ENCODE measurements at regions of chr1 and their contacts with region 1.

Region 1: DNA sequence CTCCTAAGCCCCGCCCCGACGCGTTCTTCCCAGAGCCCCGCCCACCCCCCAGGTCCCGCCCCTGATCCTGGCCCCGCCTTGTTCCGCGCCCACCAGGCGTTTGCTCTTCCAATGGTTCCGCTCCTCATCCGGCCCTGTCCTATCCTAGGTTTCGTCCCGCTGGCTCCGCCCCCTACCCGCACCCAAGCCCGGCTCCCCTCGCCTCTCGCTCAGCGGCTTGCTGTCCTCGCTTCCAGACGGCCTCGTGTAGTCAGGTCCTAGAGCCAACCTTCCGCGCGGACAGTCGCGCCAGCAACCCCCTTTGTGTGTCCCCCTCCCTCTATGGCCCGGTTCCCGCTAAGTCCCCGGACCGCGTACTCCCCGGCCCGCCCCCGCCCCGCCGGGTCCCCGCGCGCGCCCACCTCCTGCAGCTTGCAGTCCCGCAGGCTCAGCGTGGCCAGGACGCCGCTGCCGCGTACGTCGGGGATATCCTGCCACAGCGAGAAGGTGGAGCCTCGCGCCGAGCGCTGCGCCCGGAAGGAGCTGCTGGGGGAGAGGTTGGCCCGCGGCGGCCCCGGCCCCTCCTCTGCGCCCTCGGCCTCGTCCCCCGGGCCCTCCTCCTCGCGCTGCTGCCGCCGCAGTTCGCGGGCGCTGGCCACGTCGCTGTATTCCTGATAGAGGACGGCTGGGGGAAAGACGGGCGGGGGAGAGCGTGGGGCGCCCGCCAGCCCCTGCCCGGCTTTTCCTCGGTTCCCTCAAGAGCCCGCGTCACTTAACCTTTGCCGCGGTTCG is 5.7 kb downstream of the ARHGEF19 start:
- DNase-seq: peak; percentile 98 to 99 (median 99)
- H3K4me3 ChIP-seq: peak overlapping the region; percentile 51
- H3K27ac ChIP-seq: peak overlapping the region; percentile 76 to 90
- H3K4me1 ChIP-seq: peaks cover 5% of the 10 kb centered on the region
- H3K27me3 ChIP-seq: no peaks in the 10 kb centered on the region
- CTCF ChIP-seq: no peak
- EP300 ChIP-seq: no peak
- POLR2A ChIP-seq: peak; percentile 52

Region 2: DNA sequence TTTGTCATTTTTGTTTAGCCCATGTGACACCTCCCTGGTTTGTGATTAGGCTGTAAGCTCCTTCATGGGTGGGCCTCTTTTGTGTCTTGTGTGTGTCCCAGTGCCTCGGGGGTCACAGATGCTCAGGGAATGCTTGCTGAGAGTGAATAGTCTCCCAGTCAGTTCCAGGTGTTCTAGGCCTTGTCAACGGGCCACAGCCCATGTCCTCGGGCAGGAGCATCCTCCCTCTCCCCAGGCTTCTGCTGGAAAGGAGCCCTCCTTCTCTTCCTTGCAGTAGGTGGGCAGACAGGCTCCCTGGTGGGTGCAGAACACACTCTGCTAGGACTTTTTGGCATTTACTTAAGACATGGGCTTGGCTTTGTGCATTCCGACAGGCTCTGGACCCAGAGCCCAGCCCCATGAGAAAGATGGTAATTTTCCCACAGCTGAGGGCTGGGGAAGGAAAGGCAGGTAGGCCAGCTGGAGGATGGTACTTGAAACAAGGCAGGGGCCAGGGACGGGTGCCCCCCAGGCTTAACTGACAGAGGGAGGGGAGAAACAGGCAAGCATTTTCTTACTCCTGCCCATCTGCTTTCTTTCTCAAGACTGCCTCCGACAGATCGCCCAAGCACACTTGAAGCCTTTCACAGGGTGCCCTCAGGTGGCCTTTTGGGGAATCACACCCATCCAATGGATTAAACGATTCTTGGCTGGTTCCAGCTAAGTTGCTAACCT is 37.4 kb after region 1 on chr1:
- intact Hi-C with region 1: loop called in 1 of 4 experiments (anchors 5 kb)
- DNase-seq: peak; percentile 76 to 91 (median 82)
- H3K4me3 ChIP-seq: no peak overlapping the region
- H3K27ac ChIP-seq: peak overlapping the region; percentile 23 to 46
- H3K4me1 ChIP-seq: peaks cover 23% of the 10 kb centered on the region
- H3K27me3 ChIP-seq: no peaks in the 10 kb centered on the region
- CTCF ChIP-seq: peak; percentile 74 to 93 (median 91)
- EP300 ChIP-seq: no peak
- POLR2A ChIP-seq: no peak

Region 3: GRCh38 chr1:17045634-17046333 is 839.1 kb after region 1 on chr1:
- intact Hi-C with region 1: no loop called
- DNase-seq: no peak
- H3K4me3 ChIP-seq: peak overlapping the region; percentile 5
- H3K27ac ChIP-seq: no peak overlapping the region
- H3K4me1 ChIP-seq: peaks cover 3% of the 10 kb centered on the region
- H3K27me3 ChIP-seq: no peaks in the 10 kb centered on the region
- CTCF ChIP-seq: peak; percentile 37 to 88 (median 86)
- EP300 ChIP-seq: no peak
- POLR2A ChIP-seq: no peak

Measured in ovary (tissue), 10 donors.